ENCODE measurements at regions of chr5 and their contacts with region 1.

Region 1: GRCh38 chr5:41843456-41844370 is 26.5 kb downstream of the OXCT1 start:
- DNase-seq: peak; percentile 66
- H3K4me3 ChIP-seq: no peak overlapping the region
- H3K27ac ChIP-seq: no peak overlapping the region
- H3K4me1 ChIP-seq: no peaks in the 10 kb centered on the region
- H3K27me3 ChIP-seq: no peaks in the 10 kb centered on the region
- CTCF ChIP-seq: peak; percentile 61 to 63
- POLR2A ChIP-seq: no peak

Region 2: GRCh38 chr5:41270423-41271251 is 573.1 kb before region 1 on chr5:
- CTCF ChIA-PET with region 1: interaction called, 17 read pairs
- POLR2A ChIA-PET with region 1: no interaction called
- dilution Hi-C with region 1: no loop called
- intact Hi-C with region 1: loop called (anchors 2 kb)
- DNase-seq: peak; percentile 43
- H3K4me3 ChIP-seq: no peak overlapping the region
- H3K27ac ChIP-seq: no peak overlapping the region
- H3K4me1 ChIP-seq: no peaks in the 10 kb centered on the region
- H3K27me3 ChIP-seq: no peaks in the 10 kb centered on the region
- CTCF ChIP-seq: peak; percentile 35 to 57
- POLR2A ChIP-seq: no peak

Region 3: GRCh38 chr5:41598011-41598410 is 245.7 kb before region 1 on chr5:
- CTCF ChIA-PET with region 1: no interaction called
- POLR2A ChIA-PET with region 1: no interaction called
- dilution Hi-C with region 1: no loop called
- intact Hi-C with region 1: no loop called
- DNase-seq: no peak
- H3K4me3 ChIP-seq: no peak overlapping the region
- H3K27ac ChIP-seq: no peak overlapping the region
- H3K4me1 ChIP-seq: no peaks in the 10 kb centered on the region
- H3K27me3 ChIP-seq: no peaks in the 10 kb centered on the region
- CTCF ChIP-seq: no peak
- POLR2A ChIP-seq: no peak

Region 4: GRCh38 chr5:41707853-41708603 is 135.7 kb before region 1 on chr5:
- CTCF ChIA-PET with region 1: interaction called, 155 read pairs
- POLR2A ChIA-PET with region 1: no interaction called
- dilution Hi-C with region 1: no loop called
- intact Hi-C with region 1: loop called (anchors 1 kb)
- DNase-seq: peak; percentile 57
- H3K4me3 ChIP-seq: no peak overlapping the region
- H3K27ac ChIP-seq: no peak overlapping the region
- H3K4me1 ChIP-seq: no peaks in the 10 kb centered on the region
- H3K27me3 ChIP-seq: peaks cover 4 to 16% of the 10 kb centered on the region in 2 experiments
- CTCF ChIP-seq: peak; percentile 51 to 52
- POLR2A ChIP-seq: no peak

Region 5: DNA sequence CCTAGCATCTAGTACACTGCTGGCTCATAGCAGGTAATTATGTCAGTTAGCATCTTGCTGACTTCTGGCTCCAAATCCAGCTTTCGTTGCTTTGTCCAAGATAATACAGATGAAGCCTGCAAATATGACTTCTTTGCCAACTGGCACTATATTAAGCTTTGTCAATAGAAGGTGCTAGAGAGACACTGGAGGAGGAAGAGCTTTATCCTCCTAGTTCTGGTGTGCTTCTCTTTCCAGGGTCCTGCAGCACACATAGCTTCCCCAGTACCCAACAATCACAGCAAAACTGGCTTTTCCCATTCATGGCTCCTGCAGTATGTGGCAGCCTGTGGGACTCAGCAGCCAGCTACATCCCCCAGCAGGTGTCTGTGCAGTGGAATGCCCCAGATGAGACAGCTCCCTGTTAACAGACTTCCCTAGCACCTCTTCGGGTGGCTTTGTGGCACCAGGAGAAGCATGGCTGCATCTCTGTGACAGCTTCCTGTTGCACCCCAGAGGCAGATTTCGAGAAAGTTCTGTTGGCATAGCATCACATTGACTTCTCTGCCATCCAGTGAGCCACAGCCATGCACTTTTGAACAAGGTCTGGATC is 121.3 kb before region 1 on chr5:
- CTCF ChIA-PET with region 1: interaction called, 66 read pairs
- POLR2A ChIA-PET with region 1: no interaction called
- dilution Hi-C with region 1: no loop called
- intact Hi-C with region 1: loop called (anchors 1 kb)
- DNase-seq: peak; percentile 26
- H3K4me3 ChIP-seq: no peak overlapping the region
- H3K27ac ChIP-seq: no peak overlapping the region
- H3K4me1 ChIP-seq: no peaks in the 10 kb centered on the region
- H3K27me3 ChIP-seq: no peaks in the 10 kb centered on the region
- CTCF ChIP-seq: peak in 1 of 2 donors; percentile 21
- POLR2A ChIP-seq: no peak

Region 6: DNA sequence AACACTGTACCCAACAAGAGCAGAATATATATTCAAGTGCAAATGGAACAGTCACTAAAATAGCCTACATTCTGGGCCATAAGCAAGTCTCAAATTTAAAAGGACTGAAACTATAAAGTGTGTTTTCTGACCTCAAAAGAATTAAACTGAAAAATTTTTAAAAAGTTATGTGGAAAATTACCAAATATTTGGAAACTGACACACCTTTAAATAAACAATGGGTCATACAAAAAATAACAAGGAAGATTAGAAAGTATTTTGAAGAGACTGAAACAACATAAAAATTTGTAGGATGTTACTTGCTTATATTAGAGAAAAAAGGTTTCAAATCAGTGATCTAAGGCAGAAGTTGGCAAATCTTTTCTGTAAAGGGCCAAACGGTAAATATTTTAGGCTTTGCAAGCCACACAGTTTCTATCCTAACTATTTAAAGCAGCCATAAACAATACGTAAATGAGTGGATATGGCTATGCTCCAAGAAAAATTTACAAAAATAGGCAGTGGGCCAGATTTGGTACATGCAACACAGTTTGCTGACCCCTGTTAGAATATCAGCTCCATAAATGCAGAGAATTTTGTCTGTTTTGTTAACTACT is 54.8 kb before region 1 on chr5:
- CTCF ChIA-PET with region 1: interaction called, 20 read pairs
- POLR2A ChIA-PET with region 1: no interaction called
- dilution Hi-C with region 1: no loop called
- intact Hi-C with region 1: loop called (anchors 2 kb)
- DNase-seq: peak; percentile 95
- H3K4me3 ChIP-seq: peak overlapping the region in 1 of 3 experiments; percentile 14
- H3K27ac ChIP-seq: peak overlapping the region; percentile 81
- H3K4me1 ChIP-seq: peaks cover 45% of the 10 kb centered on the region
- H3K27me3 ChIP-seq: no peaks in the 10 kb centered on the region
- CTCF ChIP-seq: no peak
- POLR2A ChIP-seq: no peak

Region 7: DNA sequence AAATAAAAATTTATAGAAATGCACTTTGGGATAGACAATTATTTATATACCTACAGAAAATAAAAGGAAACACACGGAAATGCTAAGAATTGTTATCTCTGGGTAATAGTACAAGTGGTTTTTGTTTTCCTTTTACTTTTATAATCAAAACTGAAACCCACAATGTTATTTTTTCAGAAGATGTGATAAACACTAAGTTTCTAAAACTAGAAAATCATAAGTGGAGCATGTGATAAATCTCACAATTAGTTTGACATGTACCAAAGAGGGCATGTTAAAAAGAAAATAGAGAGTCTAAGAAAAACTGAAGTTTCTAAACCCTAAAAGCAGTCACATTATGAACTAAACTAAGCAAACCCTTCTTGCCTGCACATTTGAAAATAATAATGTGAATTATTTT is 34.6 kb before region 1 on chr5:
- CTCF ChIA-PET with region 1: interaction called, 11 read pairs
- POLR2A ChIA-PET with region 1: no interaction called
- dilution Hi-C with region 1: no loop called
- intact Hi-C with region 1: no loop called
- DNase-seq: no peak
- H3K4me3 ChIP-seq: no peak overlapping the region
- H3K27ac ChIP-seq: no peak overlapping the region
- H3K4me1 ChIP-seq: peaks cover 24% of the 10 kb centered on the region
- H3K27me3 ChIP-seq: no peaks in the 10 kb centered on the region
- CTCF ChIP-seq: no peak
- POLR2A ChIP-seq: no peak

Region 8: GRCh38 chr5:42057254-42057690 is 213.6 kb after region 1 on chr5:
- CTCF ChIA-PET with region 1: interaction called, 12 read pairs
- POLR2A ChIA-PET with region 1: no interaction called
- dilution Hi-C with region 1: no loop called
- intact Hi-C with region 1: no loop called
- DNase-seq: peak; percentile 51
- H3K4me3 ChIP-seq: no peak overlapping the region
- H3K27ac ChIP-seq: no peak overlapping the region
- H3K4me1 ChIP-seq: no peaks in the 10 kb centered on the region
- H3K27me3 ChIP-seq: no peaks in the 10 kb centered on the region
- CTCF ChIP-seq: peak; percentile 65 to 72
- POLR2A ChIP-seq: no peak

Measured in endothelial cell of umbilical vein (primary cell).